Heart right ventricle (tissue), 16 donors: ENCODE measurements at regions of chr3 and their contacts with region 1.

Region 1: GRCh38 chr3:39541917-39542329 is 74.4 kb downstream of the MOBP start:
- DNase-seq: no peak
- ATAC-seq: no peak
- H3K4me3 ChIP-seq: peak overlapping the region in 3 of 10 donors; percentile 6 to 29 (median 28)
- H3K27ac ChIP-seq: no peak overlapping the region
- H3K4me1 ChIP-seq: peaks cover 0 to 4% (median 0%) of the 10 kb centered on the region in 9 donors
- H3K27me3 ChIP-seq: peaks cover 0 to 6% (median 0%) of the 10 kb centered on the region in 7 donors
- CTCF ChIP-seq: peak in 8 of 9 donors; percentile 13 to 71 (median 54)

Region 2: GRCh38 chr3:40191850-40192448 is 650.0 kb after region 1 on chr3:
- intact Hi-C with region 1: loop called in 1 of 10 experiments (anchors 10 kb)
- DNase-seq: peak; percentile 37 to 41
- ATAC-seq: peak in 4 of 8 donors; percentile 54 to 69 (median 62)
- H3K4me3 ChIP-seq: no peak overlapping the region
- H3K27ac ChIP-seq: no peak overlapping the region
- H3K4me1 ChIP-seq: peaks cover 0 to 21% (median 5%) of the 10 kb centered on the region in 9 donors
- H3K27me3 ChIP-seq: no peaks in the 10 kb centered on the region
- CTCF ChIP-seq: peak; percentile 91 to 98 (median 95)